ENCODE measurements at regions of chr17 and their contacts with region 1.

Region 1: GRCh38 chr17:47649153-47649971 is at the start of gene KPNB1:
- DNase-seq: peak; percentile 99
- H3K4me3 Mint-ChIP-seq: peak within 1 kb of the TSS; percentile 85
- H3K27ac Mint-ChIP-seq: peak within 1 kb of the TSS; percentile 96
- H3K4me1 Mint-ChIP-seq: peaks cover 45% of the 10 kb centered on the region
- H3K27me3 Mint-ChIP-seq: no peaks in the 10 kb centered on the region
- total RNA-seq, gene KPNB1: 409 to 427 TPM

Region 2: DNA sequence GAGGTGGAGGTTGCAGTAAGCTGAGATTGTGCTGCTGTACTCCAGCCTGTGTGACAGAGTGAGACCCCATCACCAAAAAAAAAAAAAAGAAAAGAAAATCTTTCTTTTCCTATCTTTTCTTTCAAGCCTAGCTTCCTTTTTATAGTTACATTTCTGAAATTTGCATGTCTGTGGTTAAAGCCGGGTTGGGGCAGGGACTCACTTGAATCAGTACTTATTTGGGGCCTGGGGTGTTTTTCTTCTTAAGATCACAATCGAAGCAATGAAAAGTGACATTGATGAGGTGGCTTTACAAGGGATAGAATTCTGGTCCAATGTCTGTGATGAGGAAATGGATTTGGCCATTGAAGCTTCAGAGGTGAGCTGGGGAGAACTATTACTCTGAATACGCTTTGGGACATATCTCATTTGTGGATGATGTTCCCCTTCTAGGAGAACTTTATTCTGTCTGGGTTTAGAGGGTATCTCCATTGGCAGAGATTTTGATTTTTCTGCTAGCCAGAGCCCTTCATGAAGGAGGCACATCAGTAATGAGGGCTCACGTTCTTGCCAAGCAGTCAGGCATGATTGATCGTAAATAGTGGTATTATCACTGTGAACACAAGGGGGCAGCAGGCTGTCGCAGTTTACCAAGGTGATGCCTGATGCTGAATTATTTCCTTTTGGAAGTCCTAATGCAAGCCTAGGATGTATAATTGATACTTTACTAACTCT is 14.7 kb after region 1 on chr17:
- CTCF ChIA-PET with region 1: interaction called, 35 read pairs
- POLR2A ChIA-PET with region 1: interaction called, 8 read pairs
- DNase-seq: peak; percentile 75
- H3K4me3 Mint-ChIP-seq: no peak overlapping the region
- H3K27ac Mint-ChIP-seq: peak overlapping the region; percentile 74
- H3K4me1 Mint-ChIP-seq: peaks cover 44% of the 10 kb centered on the region
- H3K27me3 Mint-ChIP-seq: no peaks in the 10 kb centered on the region

Region 3: GRCh38 chr17:47675380-47676198 is 26.2 kb after region 1 on chr17:
- CTCF ChIA-PET with region 1: interaction called, 26 read pairs
- POLR2A ChIA-PET with region 1: interaction called, 3 read pairs
- DNase-seq: no peak
- H3K4me3 Mint-ChIP-seq: no peak overlapping the region
- H3K27ac Mint-ChIP-seq: no peak overlapping the region
- H3K4me1 Mint-ChIP-seq: peaks cover 42% of the 10 kb centered on the region
- H3K27me3 Mint-ChIP-seq: no peaks in the 10 kb centered on the region